ENCODE measurements at regions of chr2 and their contacts with region 1.

Region 1: GRCh38 chr2:70301344-70302194 is at the start of gene FAM136A:
- DNase-seq: peak; percentile 81 to 93 (median 88)
- ATAC-seq: peak; percentile 98
- H3K4me3 ChIP-seq: peak within 1 kb of the TSS; percentile 83
- H3K4me3 Mint-ChIP-seq: peak within 1 kb of the TSS; percentile 87 to 97 (median 92)
- H3K27ac ChIP-seq: peak within 1 kb of the TSS; percentile 81
- H3K27ac Mint-ChIP-seq: peak within 1 kb of the TSS; percentile 84 to 94 (median 90)
- H3K4me1 ChIP-seq: peaks cover 6 to 7% of the 10 kb centered on the region in 2 donors
- H3K4me1 Mint-ChIP-seq: peaks cover 10 to 40% (median 27%) of the 10 kb centered on the region in 7 donors
- H3K27me3 ChIP-seq: no peaks in the 10 kb centered on the region
- H3K27me3 Mint-ChIP-seq: no peaks in the 10 kb centered on the region
- total RNA-seq, gene FAM136A: 16.2 to 40.9 (median 28.2) TPM

Region 2: GRCh38 chr2:69436938-69437750 is 864.4 kb before region 1 on chr2 and contains the start of gene NFU1:
- CTCF ChIA-PET with region 1: no interaction called
- POLR2A ChIA-PET with region 1: no interaction called
- intact Hi-C with region 1: loop called in 1 of 2 experiments (anchors 5 kb)
- DNase-seq: peak; percentile 76 to 89 (median 85)
- ATAC-seq: peak; percentile 91
- H3K4me3 ChIP-seq: peak within 1 kb of the TSS; percentile 68
- H3K4me3 Mint-ChIP-seq: peak within 1 kb of the TSS; percentile 92 to 100 (median 94)
- H3K27ac ChIP-seq: peak within 1 kb of the TSS; percentile 98
- H3K27ac Mint-ChIP-seq: peak within 1 kb of the TSS; percentile 97 to 100 (median 99)
- H3K4me1 ChIP-seq: peaks cover 18 to 21% of the 10 kb centered on the region in 2 donors
- H3K4me1 Mint-ChIP-seq: peaks cover 14 to 48% (median 40%) of the 10 kb centered on the region in 7 donors
- H3K27me3 ChIP-seq: no peaks in the 10 kb centered on the region
- H3K27me3 Mint-ChIP-seq: no peaks in the 10 kb centered on the region
- total RNA-seq, gene NFU1: 16.1 to 25.8 (median 22.6) TPM

Region 3: GRCh38 chr2:70142590-70143313 is 158.8 kb before region 1 on chr2:
- CTCF ChIA-PET with region 1: interaction called, 3 read pairs
- POLR2A ChIA-PET with region 1: interaction called, 4 read pairs
- intact Hi-C with region 1: loop called in 1 of 2 experiments (anchors 1 kb)
- DNase-seq: peak; percentile 99 to 100 (median 100)
- ATAC-seq: peak; percentile 85
- H3K4me3 ChIP-seq: peak overlapping the region; percentile 81
- H3K4me3 Mint-ChIP-seq: peak overlapping the region; percentile 83 to 96 (median 91)
- H3K27ac ChIP-seq: peak overlapping the region; percentile 97
- H3K27ac Mint-ChIP-seq: peak overlapping the region; percentile 97 to 99 (median 97)
- H3K4me1 ChIP-seq: peaks cover 27 to 39% of the 10 kb centered on the region in 2 donors
- H3K4me1 Mint-ChIP-seq: peaks cover 37 to 69% (median 55%) of the 10 kb centered on the region in 7 donors
- H3K27me3 ChIP-seq: no peaks in the 10 kb centered on the region
- H3K27me3 Mint-ChIP-seq: peaks cover 0 to 2% (median 0%) of the 10 kb centered on the region in 5 donors

Region 4: DNA sequence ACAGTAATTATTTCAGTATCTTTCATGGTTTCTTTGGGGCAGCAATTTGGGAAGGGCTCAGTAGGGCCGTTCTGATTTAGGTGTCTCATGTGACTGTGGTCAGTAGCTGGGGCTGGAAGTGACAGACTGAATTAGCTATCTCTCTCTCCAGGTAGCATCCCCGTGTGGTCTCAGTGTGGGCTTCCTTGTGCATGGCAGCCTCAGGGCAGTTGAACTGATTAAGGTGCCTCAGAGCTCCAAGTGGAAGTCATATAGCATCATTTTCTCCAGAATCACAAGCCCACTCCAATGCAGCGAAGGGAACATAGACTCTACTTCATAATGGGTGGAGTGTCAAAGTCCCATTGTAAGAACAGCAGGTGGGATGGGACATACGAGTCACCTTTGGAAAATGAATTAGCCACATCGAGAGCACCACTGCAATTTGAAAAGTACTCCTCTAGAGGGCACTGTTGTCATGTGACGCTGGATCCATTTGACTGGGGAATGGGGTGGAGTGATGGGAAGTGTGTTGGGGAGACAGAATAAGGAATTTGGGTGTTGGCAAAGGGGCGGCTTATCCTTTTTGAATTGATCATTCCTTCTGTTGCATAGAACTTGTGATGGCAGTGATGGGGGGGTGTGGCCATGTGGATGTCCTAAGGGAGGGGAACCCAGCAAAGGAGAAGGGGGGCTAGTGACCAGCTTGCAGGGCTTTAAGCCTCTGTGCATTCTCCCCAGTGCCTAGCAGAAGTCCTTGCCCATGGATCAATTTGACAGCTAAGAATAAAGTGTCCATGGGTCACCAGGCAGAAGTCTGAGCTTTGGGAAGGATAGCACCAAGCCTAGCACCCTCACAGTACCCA is 39.6 kb after region 1 on chr2:
- CTCF ChIA-PET with region 1: interaction called, 16 read pairs
- POLR2A ChIA-PET with region 1: no interaction called
- intact Hi-C with region 1: loop called (anchors 1 kb)
- DNase-seq: peak; percentile 11 to 64 (median 45)
- ATAC-seq: peak; percentile 80
- H3K4me3 ChIP-seq: no peak overlapping the region
- H3K4me3 Mint-ChIP-seq: peak overlapping the region in 1 of 10 donors; percentile 27
- H3K27ac ChIP-seq: no peak overlapping the region
- H3K27ac Mint-ChIP-seq: no peak overlapping the region
- H3K4me1 ChIP-seq: peaks cover 0 to 8% of the 10 kb centered on the region in 2 donors
- H3K4me1 Mint-ChIP-seq: peaks cover 0 to 13% (median 11%) of the 10 kb centered on the region in 7 donors
- H3K27me3 ChIP-seq: no peaks in the 10 kb centered on the region
- H3K27me3 Mint-ChIP-seq: peaks cover 0 to 26% (median 0%) of the 10 kb centered on the region in 5 donors

Region 5: GRCh38 chr2:70656421-70657010 is 354.9 kb after region 1 on chr2:
- CTCF ChIA-PET with region 1: interaction called, 29 read pairs
- POLR2A ChIA-PET with region 1: interaction called, 4 read pairs
- intact Hi-C with region 1: no loop called
- DNase-seq: peak in 7 of 9 donors; percentile 67 to 84 (median 80)
- ATAC-seq: peak; percentile 86
- H3K4me3 ChIP-seq: no peak overlapping the region
- H3K4me3 Mint-ChIP-seq: peak overlapping the region in 9 of 10 donors; percentile 12 to 73 (median 59)
- H3K27ac ChIP-seq: peak overlapping the region; percentile 63
- H3K27ac Mint-ChIP-seq: peak overlapping the region in 8 of 9 donors; percentile 64 to 96 (median 88)
- H3K4me1 ChIP-seq: peaks cover 0 to 29% of the 10 kb centered on the region in 2 donors
- H3K4me1 Mint-ChIP-seq: peaks cover 11 to 52% (median 37%) of the 10 kb centered on the region in 7 donors
- H3K27me3 ChIP-seq: no peaks in the 10 kb centered on the region
- H3K27me3 Mint-ChIP-seq: peaks cover 0 to 26% (median 22%) of the 10 kb centered on the region in 5 donors

Region 6: GRCh38 chr2:70871398-70872211 is 570.0 kb after region 1 on chr2:
- CTCF ChIA-PET with region 1: interaction called, 4 read pairs
- POLR2A ChIA-PET with region 1: no interaction called
- intact Hi-C with region 1: loop called (anchors 5 to 10 kb)
- DNase-seq: peak; percentile 38 to 83 (median 69)
- ATAC-seq: peak; percentile 98
- H3K4me3 ChIP-seq: peak overlapping the region; percentile 23
- H3K4me3 Mint-ChIP-seq: peak overlapping the region in 8 of 10 donors; percentile 37 to 74 (median 52)
- H3K27ac ChIP-seq: no peak overlapping the region
- H3K27ac Mint-ChIP-seq: no peak overlapping the region
- H3K4me1 ChIP-seq: peaks cover 8 to 9% of the 10 kb centered on the region in 2 donors
- H3K4me1 Mint-ChIP-seq: peaks cover 0 to 7% (median 4%) of the 10 kb centered on the region in 7 donors
- H3K27me3 ChIP-seq: peaks cover 5 to 14% of the 10 kb centered on the region in 2 donors
- H3K27me3 Mint-ChIP-seq: peaks cover 31 to 46% (median 44%) of the 10 kb centered on the region in 5 donors

Region 7: DNA sequence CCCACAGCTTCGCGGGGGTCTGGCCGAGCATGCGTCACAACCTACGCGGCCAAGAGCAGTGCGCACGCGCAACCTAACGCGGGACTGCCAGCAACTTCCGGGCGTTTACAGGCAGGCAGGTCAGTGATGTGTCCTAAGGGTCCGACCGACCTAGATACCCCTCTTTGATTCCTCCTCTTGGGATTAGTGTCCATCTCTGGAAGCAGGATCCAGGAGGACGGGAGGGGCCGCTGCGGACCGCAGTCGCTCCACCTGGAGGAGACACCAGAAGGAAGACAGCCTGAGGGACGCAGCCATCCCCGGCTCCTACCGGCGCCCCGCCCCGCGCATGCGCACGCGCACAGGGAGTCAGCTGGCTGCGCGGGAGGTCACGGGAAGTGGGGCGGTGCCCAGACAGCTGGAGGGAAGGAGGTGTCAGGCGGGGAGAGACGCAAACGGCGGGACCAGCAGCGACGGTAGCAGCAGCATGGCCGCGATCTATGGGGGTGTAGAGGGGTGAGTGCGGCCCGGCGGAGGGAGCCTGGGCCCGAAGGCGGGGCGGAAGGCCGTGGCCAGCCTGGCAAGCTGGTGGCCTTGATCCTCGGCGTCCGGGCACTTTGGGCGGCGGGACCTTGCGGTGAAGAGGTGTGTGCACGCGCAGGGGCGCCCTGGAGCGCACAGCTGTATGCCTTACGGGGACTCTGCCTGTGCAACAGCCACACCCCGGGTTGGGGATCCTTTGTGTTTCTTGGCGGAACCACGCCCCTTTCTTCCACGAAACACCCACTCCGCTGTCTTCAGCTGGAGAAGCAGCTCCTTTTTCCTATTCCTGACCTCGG is 766.9 kb after region 1 on chr2 and contains the start of gene NAGK:
- CTCF ChIA-PET with region 1: no interaction called
- POLR2A ChIA-PET with region 1: no interaction called
- intact Hi-C with region 1: loop called in 1 of 2 experiments (anchors 10 kb)
- DNase-seq: peak; percentile 97 to 99 (median 99)
- ATAC-seq: peak; percentile 86
- H3K4me3 ChIP-seq: peak within 1 kb of the TSS; percentile 81
- H3K4me3 Mint-ChIP-seq: peak within 1 kb of the TSS; percentile 89 to 100 (median 98)
- H3K27ac ChIP-seq: peak within 1 kb of the TSS; percentile 96
- H3K27ac Mint-ChIP-seq: peak within 1 kb of the TSS; percentile 97 to 100 (median 99)
- H3K4me1 ChIP-seq: peaks cover 39 to 50% of the 10 kb centered on the region in 2 donors
- H3K4me1 Mint-ChIP-seq: peaks cover 40 to 68% (median 57%) of the 10 kb centered on the region in 7 donors
- H3K27me3 ChIP-seq: no peaks in the 10 kb centered on the region
- H3K27me3 Mint-ChIP-seq: peaks cover 0 to 7% (median 0%) of the 10 kb centered on the region in 5 donors
- total RNA-seq, gene NAGK: 92.4 to 169 (median 127) TPM

Measured in naive thymus-derived CD4-positive, alpha-beta T cell (primary cell).